K562 (cell line): ENCODE measurements at regions of chr2 and their contacts with region 1.

Region 1: GRCh38 chr2:177332041-177332991 is 60.3 kb upstream of the AGPS start:
- DNase-seq: peak; percentile 61 to 84 (median 66)
- ATAC-seq: peak; percentile 83
- H3K4me3 ChIP-seq: no peak overlapping the region
- H3K27ac ChIP-seq: peak overlapping the region; percentile 43; the same call in 2 of the 3 replicates
- H3K4me1 ChIP-seq: peaks cover 0 to 21% of the 10 kb centered on the region in 2 experiments; a peak in 4 of 5 replicates
- H3K27me3 ChIP-seq: no peaks in the 10 kb centered on the region
- CTCF ChIP-seq: peak; percentile 78 to 95 (median 81)
- EP300 ChIP-seq: peak; percentile 60
- POLR2A ChIP-seq: no peak
- RAD21 ChIP-seq: peak; percentile 92

Region 2: GRCh38 chr2:177413703-177414102 is 81.4 kb after region 1 on chr2:
- CTCF ChIA-PET with region 1: interaction called, 69 read pairs
- POLR2A ChIA-PET with region 1: interaction called, 3 read pairs
- in situ Hi-C with region 1: loop called (anchors 10 kb)
- intact Hi-C with region 1: loop called (anchors 1 kb)
- DNase-seq: no peak
- ATAC-seq: no peak
- H3K4me3 ChIP-seq: no peak overlapping the region
- H3K27ac ChIP-seq: no peak overlapping the region
- H3K4me1 ChIP-seq: no peaks in the 10 kb centered on the region
- H3K27me3 ChIP-seq: no peaks in the 10 kb centered on the region
- CTCF ChIP-seq: no peak
- EP300 ChIP-seq: no peak
- POLR2A ChIP-seq: no peak
- RAD21 ChIP-seq: no peak

Region 3: DNA sequence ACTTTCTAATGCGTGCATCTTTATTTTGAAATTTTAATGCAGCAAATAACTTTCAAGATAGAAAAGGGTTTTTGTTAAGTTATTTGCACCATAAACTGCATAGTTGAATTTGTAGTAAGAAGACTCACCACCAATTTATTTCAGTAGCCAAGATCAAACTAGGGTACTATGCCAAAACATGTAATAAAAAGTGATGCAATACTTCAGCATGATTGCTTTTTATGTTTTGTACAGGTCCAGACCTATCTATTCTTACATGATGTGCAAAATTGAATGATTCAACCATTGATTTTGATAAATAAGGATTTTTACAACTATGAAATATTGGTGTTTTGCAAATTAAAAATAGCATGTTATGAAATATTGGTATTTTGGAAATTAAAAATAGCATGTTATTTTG is 87.0 kb after region 1 on chr2:
- CTCF ChIA-PET with region 1: interaction called, 69 read pairs
- POLR2A ChIA-PET with region 1: no interaction called
- in situ Hi-C with region 1: loop called (anchors 10 kb)
- intact Hi-C with region 1: loop called (anchors 1 kb)
- DNase-seq: no peak
- ATAC-seq: peak; percentile 37; the same call in 1 of the 3 replicates
- H3K4me3 ChIP-seq: no peak overlapping the region
- H3K27ac ChIP-seq: no peak overlapping the region
- H3K4me1 ChIP-seq: no peaks in the 10 kb centered on the region
- H3K27me3 ChIP-seq: no peaks in the 10 kb centered on the region
- CTCF ChIP-seq: no peak
- EP300 ChIP-seq: no peak
- POLR2A ChIP-seq: no peak
- RAD21 ChIP-seq: no peak

Region 4: DNA sequence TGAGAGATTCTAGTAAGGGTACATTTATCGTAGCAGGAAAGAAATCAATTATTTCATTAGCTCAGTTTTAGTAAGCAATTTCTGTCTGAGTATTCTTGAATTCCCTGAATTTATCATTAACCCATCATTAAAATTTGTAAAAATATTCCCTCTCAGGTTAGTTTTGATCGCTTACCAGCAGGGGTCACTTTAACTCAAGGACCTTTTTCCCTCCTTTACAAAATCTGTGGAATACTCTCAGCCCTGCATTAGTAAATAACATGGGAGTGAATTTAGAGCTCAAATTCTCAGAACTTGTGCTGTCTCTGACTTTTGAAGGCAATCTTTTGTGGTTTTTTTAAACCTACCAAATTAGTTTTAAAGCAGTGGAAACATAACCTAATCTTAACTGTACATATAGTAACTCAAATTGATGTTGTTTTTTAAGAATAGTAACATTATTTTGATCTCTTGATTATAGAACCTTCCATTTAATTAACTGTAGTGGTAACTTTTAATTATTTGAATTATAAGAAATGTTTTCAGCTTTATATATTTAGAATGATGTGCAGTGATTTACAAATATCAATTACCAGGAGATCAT is 157.5 kb after region 1 on chr2:
- CTCF ChIA-PET with region 1: no interaction called
- POLR2A ChIA-PET with region 1: no interaction called
- in situ Hi-C with region 1: no loop called
- intact Hi-C with region 1: loop called (anchors 10 kb)
- DNase-seq: peak in 3 of 4 experiments; percentile 19 to 35 (median 21)
- ATAC-seq: peak; percentile 70
- H3K4me3 ChIP-seq: no peak overlapping the region
- H3K27ac ChIP-seq: no peak overlapping the region
- H3K4me1 ChIP-seq: no peaks in the 10 kb centered on the region
- H3K27me3 ChIP-seq: no peaks in the 10 kb centered on the region
- CTCF ChIP-seq: peak; percentile 36 to 83 (median 50); a peak in 5 of 6 replicates
- EP300 ChIP-seq: no peak
- POLR2A ChIP-seq: no peak
- RAD21 ChIP-seq: peak; percentile 74 to 84

Region 5: GRCh38 chr2:177604271-177605065 is 272.2 kb after region 1 on chr2:
- CTCF ChIA-PET with region 1: interaction called, 3 read pairs
- POLR2A ChIA-PET with region 1: no interaction called
- in situ Hi-C with region 1: no loop called
- intact Hi-C with region 1: loop called (anchors 1 kb)
- DNase-seq: peak; percentile 45 to 72 (median 53)
- ATAC-seq: peak; percentile 88
- H3K4me3 ChIP-seq: no peak overlapping the region
- H3K27ac ChIP-seq: no peak overlapping the region
- H3K4me1 ChIP-seq: no peaks in the 10 kb centered on the region
- H3K27me3 ChIP-seq: no peaks in the 10 kb centered on the region; a peak in 1 of 5 replicates
- CTCF ChIP-seq: peak; percentile 67 to 79 (median 77)
- EP300 ChIP-seq: no peak
- POLR2A ChIP-seq: no peak
- RAD21 ChIP-seq: peak; percentile 69 to 87

Region 6: GRCh38 chr2:177763532-177764265 is 431.4 kb after region 1 on chr2:
- CTCF ChIA-PET with region 1: interaction called, 24 read pairs
- POLR2A ChIA-PET with region 1: no interaction called
- in situ Hi-C with region 1: loop called (anchors 10 kb)
- intact Hi-C with region 1: loop called (anchors 1 kb)
- DNase-seq: peak; percentile 74 to 90 (median 85)
- ATAC-seq: peak; percentile 98
- H3K4me3 ChIP-seq: no peak overlapping the region
- H3K27ac ChIP-seq: no peak overlapping the region
- H3K4me1 ChIP-seq: peaks cover 4 to 16% of the 10 kb centered on the region in 2 experiments; a peak in 4 of 5 replicates
- H3K27me3 ChIP-seq: no peaks in the 10 kb centered on the region
- CTCF ChIP-seq: peak; percentile 91 to 96 (median 92)
- EP300 ChIP-seq: no peak
- POLR2A ChIP-seq: no peak
- RAD21 ChIP-seq: peak; percentile 69 to 77